ENCODE measurements at regions of chr7 and their contacts with region 1.

Region 1: GRCh38 chr7:99296471-99296870 is 23.8 kb downstream of the MYH16 start:
- DNase-seq: no peak
- ATAC-seq: no peak
- H3K4me3 ChIP-seq: no peak overlapping the region
- H3K27ac ChIP-seq: no peak overlapping the region
- H3K4me1 ChIP-seq: no peaks in the 10 kb centered on the region
- H3K27me3 ChIP-seq: no peaks in the 10 kb centered on the region

Region 2: DNA sequence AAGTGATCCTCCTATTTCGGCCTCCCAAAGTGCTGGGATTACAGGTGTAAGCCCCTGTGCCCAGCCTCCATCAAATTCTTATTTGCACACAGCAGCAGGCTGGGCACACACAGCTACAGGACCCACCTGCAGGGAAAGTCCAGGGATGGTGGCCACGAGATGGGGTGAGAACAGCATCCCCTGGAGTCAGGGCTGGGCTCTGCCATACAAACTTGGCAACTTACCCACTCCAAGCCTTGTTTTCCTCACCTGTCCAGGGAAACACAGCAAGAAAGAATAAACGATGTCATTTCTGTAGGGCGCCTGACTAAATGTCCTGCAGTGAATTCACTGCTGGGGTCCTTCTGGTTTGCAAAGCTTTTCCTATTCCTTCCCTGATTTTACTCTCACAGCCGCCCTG is 18.3 kb before region 1 on chr7:
- intact Hi-C with region 1: loop called in 1 of 2 experiments (anchors 2 kb)
- DNase-seq: no peak
- ATAC-seq: no peak
- H3K4me3 ChIP-seq: no peak overlapping the region
- H3K27ac ChIP-seq: no peak overlapping the region
- H3K4me1 ChIP-seq: no peaks in the 10 kb centered on the region
- H3K27me3 ChIP-seq: no peaks in the 10 kb centered on the region

Measured in aorta (tissue), 5 donors.